ENCODE measurements at regions of chr3 and their contacts with region 1.

Region 1: DNA sequence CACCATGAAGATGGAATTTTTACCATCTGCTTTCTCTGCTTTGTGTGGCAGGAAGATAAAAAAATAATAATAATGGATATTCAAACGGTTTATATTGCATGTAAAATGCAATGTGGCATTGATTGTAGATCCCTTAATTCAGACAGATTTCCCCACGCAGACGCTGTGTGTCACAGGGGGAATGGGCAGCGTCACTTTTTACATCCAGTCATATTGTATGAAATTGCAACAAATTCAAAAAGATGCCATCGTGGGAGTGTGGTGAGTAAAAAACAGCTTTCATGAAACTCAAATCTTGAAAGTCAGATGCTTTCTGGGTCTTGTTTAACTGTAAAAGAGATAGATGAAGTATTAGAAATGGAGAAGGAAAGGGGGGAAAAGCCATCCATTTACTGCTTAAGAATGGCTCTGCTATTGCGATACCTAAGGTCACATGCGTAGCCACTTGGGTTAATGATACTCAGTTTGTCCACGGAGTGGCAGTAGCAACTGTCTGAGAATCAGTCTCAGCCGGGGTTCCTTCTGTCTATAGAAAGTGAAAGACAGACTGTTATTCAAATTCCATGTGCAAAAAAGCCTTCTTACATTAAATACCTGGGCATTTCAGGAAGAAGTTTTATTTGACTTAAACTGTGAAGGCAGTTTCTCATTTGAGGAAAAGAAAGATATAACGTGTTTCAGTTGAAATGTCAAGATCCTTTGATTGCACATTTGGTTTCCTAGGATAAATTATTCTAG is 28.5 kb downstream of the BTD start:
- DNase-seq: peak; percentile 91
- H3K4me3 ChIP-seq: peak overlapping the region in 1 of 3 experiments; percentile 50
- H3K27ac ChIP-seq: peak overlapping the region; percentile 100
- H3K4me1 ChIP-seq: peaks cover 52% of the 10 kb centered on the region
- H3K27me3 ChIP-seq: no peaks in the 10 kb centered on the region
- CTCF ChIP-seq: peak; percentile 61 to 76
- POLR2A ChIP-seq: no peak

Region 2: DNA sequence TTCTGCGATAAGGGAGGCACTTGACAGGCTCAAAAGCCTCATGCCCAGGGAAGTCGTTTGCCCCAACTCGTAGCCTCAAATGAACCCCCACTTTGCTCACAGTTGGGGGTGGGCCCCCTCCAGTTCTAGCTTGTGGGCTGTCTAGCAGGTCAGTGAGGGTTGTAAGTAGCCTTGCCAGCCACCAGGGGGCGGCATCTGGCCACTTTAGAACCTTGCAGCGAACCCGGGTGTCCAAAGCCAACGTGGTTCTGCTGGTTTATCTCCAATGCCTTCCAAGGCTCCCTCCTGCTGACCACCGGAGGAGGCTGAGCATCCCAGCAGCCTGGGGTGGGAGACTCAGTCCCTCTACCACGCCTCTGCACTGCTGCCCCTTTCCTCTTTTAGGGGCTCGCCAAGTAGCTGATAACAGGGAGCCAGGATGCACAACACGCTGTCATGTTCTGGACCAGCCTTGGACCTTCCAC is 521.9 kb before region 1 on chr3:
- CTCF ChIA-PET with region 1: no interaction called
- POLR2A ChIA-PET with region 1: no interaction called
- dilution Hi-C with region 1: no loop called
- intact Hi-C with region 1: no loop called
- DNase-seq: peak; percentile 62
- H3K4me3 ChIP-seq: no peak overlapping the region
- H3K27ac ChIP-seq: no peak overlapping the region
- H3K4me1 ChIP-seq: no peaks in the 10 kb centered on the region
- H3K27me3 ChIP-seq: peaks cover 2 to 3% of the 10 kb centered on the region in 2 experiments
- CTCF ChIP-seq: peak; percentile 88 to 96
- POLR2A ChIP-seq: no peak

Region 3: GRCh38 chr3:15291589-15292541 is 338.2 kb before region 1 on chr3:
- CTCF ChIA-PET with region 1: no interaction called
- POLR2A ChIA-PET with region 1: no interaction called
- dilution Hi-C with region 1: no loop called
- intact Hi-C with region 1: loop called (anchors 10 kb)
- DNase-seq: peak; percentile 77
- H3K4me3 ChIP-seq: no peak overlapping the region
- H3K27ac ChIP-seq: peak overlapping the region; percentile 85
- H3K4me1 ChIP-seq: peaks cover 51% of the 10 kb centered on the region
- H3K27me3 ChIP-seq: no peaks in the 10 kb centered on the region
- CTCF ChIP-seq: no peak
- POLR2A ChIP-seq: no peak

Region 4: DNA sequence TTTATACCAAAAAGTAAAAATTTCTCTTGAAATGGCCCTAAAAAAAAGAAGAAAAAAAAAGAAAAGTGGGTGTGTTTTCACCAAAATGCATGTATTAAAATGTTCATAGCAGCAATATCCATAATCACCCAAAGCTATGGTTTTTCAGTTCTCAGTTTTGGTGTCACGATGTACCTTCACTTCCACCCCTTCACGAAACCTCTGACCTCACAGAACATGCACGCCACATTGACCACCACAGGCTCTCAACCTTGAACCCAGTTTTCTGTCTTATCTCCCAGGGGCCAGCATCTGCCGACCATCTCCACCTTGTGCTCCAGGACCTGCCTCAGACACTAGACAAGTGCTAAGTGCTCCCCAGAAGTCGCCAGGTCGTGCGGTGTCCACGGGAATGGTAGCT is 138.9 kb before region 1 on chr3:
- CTCF ChIA-PET with region 1: no interaction called
- POLR2A ChIA-PET with region 1: no interaction called
- dilution Hi-C with region 1: no loop called
- intact Hi-C with region 1: no loop called
- DNase-seq: no peak
- H3K4me3 ChIP-seq: no peak overlapping the region
- H3K27ac ChIP-seq: no peak overlapping the region
- H3K4me1 ChIP-seq: no peaks in the 10 kb centered on the region
- H3K27me3 ChIP-seq: peaks cover 3 to 5% of the 10 kb centered on the region in 2 experiments
- CTCF ChIP-seq: no peak
- POLR2A ChIP-seq: no peak

Region 5: DNA sequence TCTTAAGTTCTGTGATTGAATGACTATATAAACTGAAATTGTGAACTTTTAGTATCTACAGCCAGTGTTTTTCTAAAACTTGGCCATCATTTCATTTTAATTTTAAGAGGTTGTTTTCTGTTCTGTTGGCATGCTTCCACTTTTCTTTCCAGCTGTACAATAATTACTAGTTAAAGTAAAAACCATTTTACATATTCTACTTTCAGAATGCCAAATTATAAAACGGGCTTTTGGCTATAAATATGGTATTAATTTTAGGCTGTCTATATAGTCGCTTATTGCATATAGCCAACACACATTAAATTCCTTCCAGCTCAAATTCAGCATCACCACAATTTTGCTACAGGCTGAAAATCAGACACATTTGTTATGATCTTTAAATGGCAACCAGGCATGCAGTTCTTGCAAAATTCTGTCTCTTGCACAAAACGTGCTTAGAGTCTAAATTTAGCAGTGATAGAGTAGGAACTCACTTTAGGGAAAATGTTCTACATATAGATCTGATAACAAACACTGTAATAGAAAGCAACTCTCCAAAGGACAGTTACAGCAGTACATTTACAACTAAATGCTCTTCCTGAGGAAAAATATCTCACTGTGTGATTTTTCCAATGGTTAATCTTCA is 52.6 kb after region 1 on chr3:
- CTCF ChIA-PET with region 1: interaction called, 8 read pairs
- POLR2A ChIA-PET with region 1: no interaction called
- dilution Hi-C with region 1: no loop called
- intact Hi-C with region 1: loop called (anchors 1 kb)
- DNase-seq: peak; percentile 35
- H3K4me3 ChIP-seq: no peak overlapping the region
- H3K27ac ChIP-seq: no peak overlapping the region
- H3K4me1 ChIP-seq: peaks cover 26% of the 10 kb centered on the region
- H3K27me3 ChIP-seq: no peaks in the 10 kb centered on the region
- CTCF ChIP-seq: no peak
- POLR2A ChIP-seq: no peak

Region 6: DNA sequence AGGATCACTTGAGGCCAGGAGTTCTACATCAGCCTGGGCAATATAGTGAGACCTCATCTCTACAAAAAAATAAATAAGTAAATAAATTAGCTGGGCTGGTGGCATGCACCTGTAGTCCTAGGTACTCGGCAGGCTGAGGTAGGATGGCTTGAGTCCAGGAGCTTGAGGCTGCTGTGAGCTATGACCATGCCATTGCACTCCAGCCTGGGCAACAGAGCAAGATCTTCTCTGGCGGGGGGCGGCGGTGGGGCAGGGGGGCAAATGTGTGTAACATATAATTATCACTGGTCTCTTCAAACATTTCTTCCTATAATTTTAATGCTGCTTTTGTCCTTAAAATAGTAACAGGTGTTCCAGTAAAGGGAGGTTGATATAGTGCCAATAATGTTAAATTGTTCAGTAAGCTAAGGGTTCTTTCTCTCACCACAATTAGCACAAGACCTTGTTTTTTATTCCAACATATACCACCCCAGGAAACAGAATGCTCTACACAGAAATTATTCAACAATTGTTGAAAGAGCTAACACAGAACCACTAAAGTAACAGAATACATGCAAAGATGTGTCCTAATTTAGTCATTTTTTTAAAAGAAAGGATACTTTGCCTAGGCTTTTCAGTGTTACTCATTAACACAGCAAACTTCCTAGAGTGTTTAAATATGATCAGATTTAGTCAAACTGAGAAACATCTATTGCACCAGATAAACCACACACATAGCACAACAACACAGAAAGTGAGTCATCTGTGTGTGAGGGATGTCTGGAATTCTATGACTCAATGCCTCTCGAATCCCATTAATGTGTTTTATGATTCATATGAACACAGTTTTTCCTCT is 138.6 kb after region 1 on chr3:
- CTCF ChIA-PET with region 1: interaction called, 4 read pairs
- POLR2A ChIA-PET with region 1: no interaction called
- dilution Hi-C with region 1: no loop called
- intact Hi-C with region 1: loop called (anchors 1 kb)
- DNase-seq: peak; percentile 94
- H3K4me3 ChIP-seq: no peak overlapping the region
- H3K27ac ChIP-seq: peak overlapping the region; percentile 89
- H3K4me1 ChIP-seq: peaks cover 17% of the 10 kb centered on the region
- H3K27me3 ChIP-seq: no peaks in the 10 kb centered on the region
- CTCF ChIP-seq: no peak
- POLR2A ChIP-seq: no peak

Region 7: DNA sequence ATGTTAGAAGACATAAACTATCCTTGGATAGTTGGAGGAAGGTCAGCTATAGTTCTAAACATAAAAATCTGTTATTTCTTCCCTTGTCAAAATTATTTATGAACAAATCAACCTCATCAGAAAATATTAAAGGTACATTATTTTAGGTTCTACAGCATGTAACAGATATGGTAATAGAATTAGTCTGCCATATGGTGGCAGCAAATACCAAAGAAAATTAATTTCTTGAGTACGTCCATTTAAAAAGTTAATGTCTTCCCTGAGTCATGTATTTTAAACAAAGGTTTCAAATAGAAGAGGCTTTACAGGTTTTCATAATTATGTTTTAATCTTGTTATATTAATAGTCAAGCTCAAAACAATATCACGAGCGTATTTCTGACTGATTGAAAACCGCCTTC is 185.7 kb after region 1 on chr3:
- CTCF ChIA-PET with region 1: interaction called, 59 read pairs
- POLR2A ChIA-PET with region 1: no interaction called
- dilution Hi-C with region 1: no loop called
- intact Hi-C with region 1: loop called (anchors 1 kb)
- DNase-seq: peak; percentile 61
- H3K4me3 ChIP-seq: no peak overlapping the region
- H3K27ac ChIP-seq: no peak overlapping the region
- H3K4me1 ChIP-seq: no peaks in the 10 kb centered on the region
- H3K27me3 ChIP-seq: no peaks in the 10 kb centered on the region
- CTCF ChIP-seq: peak; percentile 5 to 21
- POLR2A ChIP-seq: no peak

Region 8: DNA sequence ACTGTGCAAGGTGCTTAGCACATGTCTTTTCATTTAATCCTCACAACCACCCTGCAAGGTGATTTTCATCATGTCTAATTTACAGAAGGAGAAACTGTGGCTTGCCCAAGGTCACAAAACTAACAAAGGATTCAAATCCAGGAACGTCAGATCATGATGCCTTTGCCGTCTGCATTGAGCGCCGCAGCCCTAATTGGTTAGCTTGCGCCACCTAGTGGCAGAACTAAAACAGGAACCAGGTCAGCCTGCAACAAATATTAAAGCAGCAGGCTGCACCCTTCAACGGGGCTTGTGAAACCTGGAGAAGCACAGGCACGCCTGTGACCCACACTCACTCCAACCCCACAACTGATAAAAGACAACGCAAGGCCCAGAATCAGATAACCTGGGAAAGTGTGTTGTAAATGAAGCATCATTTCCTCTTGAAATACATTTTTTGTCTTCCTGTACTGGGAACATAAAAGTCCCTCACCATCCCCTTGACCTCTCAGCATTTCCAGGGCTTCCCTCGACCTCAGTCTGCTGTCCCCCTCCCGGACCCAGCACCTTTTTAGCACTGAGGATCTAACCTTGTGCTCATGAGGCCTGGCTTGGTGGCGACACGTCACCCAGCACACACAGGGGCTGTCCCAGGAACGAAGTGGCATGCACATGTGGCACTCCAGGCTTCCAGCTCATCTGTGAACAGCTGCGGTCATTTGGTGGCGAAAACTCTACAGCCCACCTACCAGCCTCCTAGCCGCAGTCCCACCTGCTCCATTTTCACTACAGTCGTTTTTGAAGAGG is 617.4 kb after region 1 on chr3:
- CTCF ChIA-PET with region 1: interaction called, 3 read pairs
- POLR2A ChIA-PET with region 1: no interaction called
- dilution Hi-C with region 1: no loop called
- intact Hi-C with region 1: loop called (anchors 1 kb)
- DNase-seq: peak; percentile 72
- H3K4me3 ChIP-seq: no peak overlapping the region
- H3K27ac ChIP-seq: no peak overlapping the region
- H3K4me1 ChIP-seq: peaks cover 11% of the 10 kb centered on the region
- H3K27me3 ChIP-seq: no peaks in the 10 kb centered on the region
- CTCF ChIP-seq: peak; percentile 86 to 87
- POLR2A ChIP-seq: no peak